Psoas muscle (tissue), 8 donors: ENCODE measurements at regions of chr2 and their contacts with region 1.

Region 1: DNA sequence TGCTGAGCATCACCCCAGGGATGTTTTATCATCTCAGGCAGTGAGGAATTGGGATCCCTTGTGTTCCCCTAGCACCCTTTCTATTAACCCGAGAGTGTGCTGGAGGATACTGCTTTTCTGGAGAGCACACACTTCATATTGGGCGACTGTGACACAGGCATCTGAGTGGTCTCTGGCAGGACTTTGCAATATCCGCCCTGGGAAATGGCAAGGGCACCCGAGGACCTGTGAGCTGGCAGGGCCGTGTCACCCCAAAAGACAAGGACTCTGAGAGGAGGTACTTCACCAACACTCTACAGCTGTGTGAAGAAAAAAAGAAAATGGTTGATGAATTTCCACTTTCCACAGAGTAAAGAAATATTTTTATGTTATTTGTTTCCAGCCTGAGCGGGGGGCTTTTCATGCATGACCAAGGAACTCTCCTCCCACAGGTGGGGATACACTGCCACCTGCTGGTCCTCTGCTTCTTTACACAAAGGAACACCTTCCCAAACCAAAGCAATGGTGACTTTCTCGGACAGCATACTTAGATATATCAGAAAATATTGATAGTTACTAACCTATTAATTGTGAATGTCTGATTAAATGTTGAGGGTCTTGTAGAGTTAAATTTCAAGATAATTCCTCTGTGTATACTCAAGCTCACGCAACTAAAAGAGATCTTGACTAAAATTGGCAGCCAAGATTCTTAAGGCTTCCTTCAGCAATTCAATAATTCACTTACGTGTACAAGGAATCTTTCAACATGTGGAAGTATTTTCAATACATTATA is 45.9 kb upstream of the REG3G start:
- DNase-seq: peak; percentile 20 to 55
- ATAC-seq: peak in 1 of 4 donors; percentile 63
- H3K4me3 ChIP-seq: no peak overlapping the region
- H3K27ac ChIP-seq: no peak overlapping the region
- H3K4me1 ChIP-seq: no peaks in the 10 kb centered on the region
- H3K27me3 ChIP-seq: no peaks in the 10 kb centered on the region
- CTCF ChIP-seq: peak; percentile 50

Region 2: DNA sequence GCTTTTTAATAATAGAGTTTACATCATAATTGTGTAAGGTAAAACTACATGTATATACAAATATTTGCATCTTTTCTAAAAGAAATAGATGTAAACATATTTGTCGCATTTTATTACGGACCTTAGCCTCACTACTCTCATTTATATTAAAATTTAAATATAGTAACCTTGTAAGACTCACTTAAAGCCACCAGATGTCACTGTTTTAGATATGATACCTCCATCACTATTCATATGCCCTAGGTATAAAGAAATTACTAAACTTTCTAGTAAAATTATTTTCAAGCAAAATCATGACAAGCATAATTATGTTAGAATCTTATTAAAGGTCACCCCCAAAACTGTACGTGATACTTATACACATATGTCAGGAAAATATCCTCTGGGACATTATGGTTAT is 628.4 kb before region 1 on chr2:
- intact Hi-C with region 1: loop called in 1 of 2 experiments (anchors 10 kb)
- DNase-seq: no peak
- ATAC-seq: no peak
- H3K4me3 ChIP-seq: no peak overlapping the region
- H3K27ac ChIP-seq: no peak overlapping the region
- H3K4me1 ChIP-seq: no peaks in the 10 kb centered on the region
- H3K27me3 ChIP-seq: no peaks in the 10 kb centered on the region
- CTCF ChIP-seq: peak; percentile 18

Region 3: DNA sequence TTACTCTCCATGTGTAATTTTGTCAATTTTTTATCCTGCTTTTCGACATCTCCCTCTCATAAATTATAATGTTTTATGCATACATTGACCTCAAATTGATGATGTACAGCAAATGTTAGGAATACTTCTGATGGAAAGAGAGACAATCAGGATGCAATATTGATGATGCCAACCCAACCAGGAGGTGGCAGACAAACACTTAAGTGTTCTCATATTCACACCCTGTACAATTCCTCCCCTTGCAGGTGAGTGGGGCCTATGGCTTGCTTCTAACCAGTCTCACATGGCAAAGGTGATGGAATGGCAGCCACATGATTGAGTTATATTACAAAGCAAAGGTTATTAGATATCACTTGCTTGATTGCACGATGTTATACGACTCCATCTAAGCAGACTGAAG is 548.3 kb before region 1 on chr2:
- intact Hi-C with region 1: loop called (anchors 10 kb)
- DNase-seq: no peak
- ATAC-seq: peak in 1 of 4 donors; percentile 70
- H3K4me3 ChIP-seq: no peak overlapping the region
- H3K27ac ChIP-seq: no peak overlapping the region
- H3K4me1 ChIP-seq: no peaks in the 10 kb centered on the region
- H3K27me3 ChIP-seq: no peaks in the 10 kb centered on the region
- CTCF ChIP-seq: peak; percentile 27

Region 4: DNA sequence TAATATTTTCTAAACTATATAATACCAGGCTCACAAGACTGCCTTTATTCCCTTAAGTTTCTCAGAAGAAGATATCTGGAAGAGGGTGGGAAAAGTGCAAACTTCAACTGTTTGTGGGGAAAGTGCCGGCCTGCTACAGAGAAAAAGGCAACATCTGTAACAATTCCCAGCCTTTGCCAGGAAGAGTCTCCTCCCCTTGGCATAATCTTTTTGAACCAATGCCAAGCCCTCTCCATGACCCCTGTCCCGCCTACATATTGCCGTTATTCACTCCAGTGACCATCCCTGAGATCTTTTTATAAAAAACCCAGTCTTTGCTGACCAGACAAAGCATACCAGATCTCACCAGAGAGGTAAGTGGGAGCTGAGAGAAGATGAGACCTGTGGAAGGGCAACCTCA is 45.9 kb after region 1 on chr2 and contains the start of gene REG3G:
- intact Hi-C with region 1: no loop called
- DNase-seq: no peak
- ATAC-seq: no peak
- H3K4me3 ChIP-seq: no peak within 1 kb of the TSS
- H3K27ac ChIP-seq: no peak within 1 kb of the TSS
- H3K4me1 ChIP-seq: no peaks in the 10 kb centered on the region
- H3K27me3 ChIP-seq: no peaks in the 10 kb centered on the region
- CTCF ChIP-seq: no peak
- total RNA-seq, gene REG3G: not detected